Activated CD8-positive, alpha-beta T cell treated with anti-CD3 and anti-CD28 coated beads for 36 hours (primary cell): ENCODE measurements at regions of chr2 and their contacts with region 1.

Region 1: GRCh38 chr2:102240640-102241370 is 54.0 kb downstream of the IL1RL2 start:
- DNase-seq: peak; percentile 92
- ATAC-seq: peak; percentile 90
- H3K4me3 Mint-ChIP-seq: no peak overlapping the region
- H3K27ac Mint-ChIP-seq: peak overlapping the region; percentile 65
- H3K4me1 Mint-ChIP-seq: peaks cover 32% of the 10 kb centered on the region
- H3K27me3 Mint-ChIP-seq: no peaks in the 10 kb centered on the region
- CTCF ChIP-seq: peak; percentile 92

Region 2: GRCh38 chr2:100640431-100641124 is 1600.2 kb before region 1 on chr2:
- CTCF ChIA-PET with region 1: no interaction called
- POLR2A ChIA-PET with region 1: no interaction called
- intact Hi-C with region 1: no loop called
- DNase-seq: no peak
- ATAC-seq: no peak
- H3K4me3 Mint-ChIP-seq: no peak overlapping the region
- H3K27ac Mint-ChIP-seq: no peak overlapping the region
- H3K4me1 Mint-ChIP-seq: peaks cover 37% of the 10 kb centered on the region
- H3K27me3 Mint-ChIP-seq: no peaks in the 10 kb centered on the region
- CTCF ChIP-seq: no peak

Region 3: DNA sequence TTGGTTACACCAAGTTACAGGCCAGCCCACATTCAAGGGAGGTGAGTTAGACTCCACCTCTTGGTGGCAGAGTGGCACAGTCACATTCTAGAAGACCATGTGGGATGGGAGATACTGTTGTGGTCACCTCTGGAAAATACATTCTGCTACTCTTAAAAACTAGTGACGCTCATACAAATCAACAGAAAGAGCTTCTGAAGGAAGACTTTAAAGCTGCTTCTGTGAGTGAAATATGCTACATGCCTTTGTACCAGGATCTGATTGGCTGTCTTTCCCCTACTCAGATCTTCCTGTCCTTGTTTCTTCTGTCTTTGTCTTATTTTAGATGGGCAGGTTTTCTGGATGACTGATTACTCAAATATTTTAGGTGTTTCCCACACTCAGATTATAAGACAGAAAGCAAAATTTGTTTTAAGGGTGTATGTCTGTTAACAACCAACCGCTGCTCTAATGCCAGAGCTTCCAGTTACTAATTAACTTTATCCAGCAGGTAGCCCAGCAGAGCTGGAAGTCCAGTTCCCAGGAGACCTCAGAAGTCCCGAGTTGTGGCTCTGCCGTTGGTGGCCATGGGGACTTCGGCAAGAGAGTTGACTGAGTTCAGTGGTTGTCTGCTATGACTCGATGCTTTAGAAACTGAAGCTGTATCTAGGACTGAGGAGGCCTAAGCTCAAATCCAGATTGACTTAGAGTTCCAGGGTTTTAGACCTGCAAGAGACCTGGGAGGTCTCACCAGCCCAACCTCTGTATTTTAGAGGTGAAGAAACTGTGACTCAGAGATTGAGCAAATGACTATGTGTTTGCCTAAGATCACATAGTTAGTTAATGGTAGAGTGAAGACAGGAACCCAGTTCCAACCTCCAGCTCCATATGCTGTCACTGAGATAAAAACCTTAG is 241.7 kb before region 1 on chr2:
- CTCF ChIA-PET with region 1: interaction called, 222 read pairs
- POLR2A ChIA-PET with region 1: no interaction called
- intact Hi-C with region 1: no loop called
- DNase-seq: peak; percentile 41
- ATAC-seq: peak; percentile 66
- H3K4me3 Mint-ChIP-seq: peak overlapping the region; percentile 8
- H3K27ac Mint-ChIP-seq: peak overlapping the region; percentile 67
- H3K4me1 Mint-ChIP-seq: peaks cover 25% of the 10 kb centered on the region
- H3K27me3 Mint-ChIP-seq: no peaks in the 10 kb centered on the region
- CTCF ChIP-seq: no peak

Region 4: DNA sequence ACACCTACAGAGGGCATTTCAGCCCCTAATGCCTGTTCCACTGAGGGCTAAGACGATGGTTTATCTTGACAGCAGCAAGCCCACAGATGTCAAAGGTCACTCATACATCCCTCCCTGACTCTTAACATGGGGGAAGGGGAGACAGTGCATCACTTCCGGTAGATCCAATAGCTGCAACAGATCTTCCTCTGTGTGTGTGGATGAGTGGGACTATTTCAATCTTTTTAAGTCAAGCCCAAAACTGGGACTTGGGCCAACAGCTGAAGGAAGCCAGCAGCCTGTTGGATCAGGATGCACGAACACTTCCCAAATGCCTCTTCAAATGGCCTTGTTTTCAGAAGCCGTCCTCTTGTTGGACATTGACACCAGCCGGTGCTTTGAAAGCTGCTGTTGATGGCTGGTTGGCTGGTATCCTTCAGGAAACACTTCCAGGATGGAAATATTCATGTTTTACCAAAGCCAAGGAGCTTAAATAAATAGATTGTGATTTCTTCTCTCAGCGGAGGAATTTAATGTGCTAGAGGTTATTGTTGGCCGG is 189.9 kb before region 1 on chr2:
- CTCF ChIA-PET with region 1: interaction called, 10 read pairs
- POLR2A ChIA-PET with region 1: no interaction called
- intact Hi-C with region 1: no loop called
- DNase-seq: no peak
- ATAC-seq: no peak
- H3K4me3 Mint-ChIP-seq: no peak overlapping the region
- H3K27ac Mint-ChIP-seq: no peak overlapping the region
- H3K4me1 Mint-ChIP-seq: peaks cover 2% of the 10 kb centered on the region
- H3K27me3 Mint-ChIP-seq: peaks cover 10% of the 10 kb centered on the region
- CTCF ChIP-seq: no peak

Region 5: GRCh38 chr2:102114290-102114721 is 126.5 kb before region 1 on chr2:
- CTCF ChIA-PET with region 1: interaction called, 16 read pairs
- POLR2A ChIA-PET with region 1: no interaction called
- intact Hi-C with region 1: no loop called
- DNase-seq: no peak
- ATAC-seq: peak; percentile 79
- H3K4me3 Mint-ChIP-seq: no peak overlapping the region
- H3K27ac Mint-ChIP-seq: no peak overlapping the region
- H3K4me1 Mint-ChIP-seq: peaks cover 41% of the 10 kb centered on the region
- H3K27me3 Mint-ChIP-seq: peaks cover 4% of the 10 kb centered on the region
- CTCF ChIP-seq: no peak

Region 6: DNA sequence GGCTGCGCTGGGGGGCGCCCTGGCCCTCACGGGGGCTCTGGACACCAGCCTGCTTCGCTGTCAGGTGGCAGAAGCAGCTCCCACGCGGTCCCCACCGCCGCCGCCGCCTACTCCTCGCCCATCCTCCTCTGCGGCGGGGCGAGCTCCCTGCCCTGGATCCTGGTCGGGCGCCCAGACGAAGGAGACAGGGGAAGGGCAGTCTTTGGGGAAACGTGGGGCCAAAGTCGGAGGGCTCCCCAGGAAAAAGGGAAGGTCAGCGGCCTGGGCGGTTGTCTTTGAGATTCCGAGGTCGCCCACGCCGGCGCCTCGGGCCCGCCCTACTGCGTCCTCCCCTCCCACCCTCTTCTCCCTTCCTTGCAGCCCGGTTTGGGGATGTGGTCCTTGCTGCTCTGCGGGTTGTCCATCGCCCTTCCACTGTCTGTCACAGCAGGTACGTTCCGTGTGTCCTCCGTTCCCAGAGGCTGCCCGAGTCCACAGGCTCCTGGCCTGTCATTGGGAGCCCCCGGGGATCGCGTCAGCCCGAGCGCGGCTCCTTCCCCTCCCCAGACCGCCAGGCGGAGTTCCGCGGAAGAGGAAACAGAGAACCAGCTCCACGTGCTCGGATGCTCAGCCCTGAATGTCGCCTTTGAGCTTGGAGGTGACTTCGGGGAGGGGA is 53.2 kb before region 1 on chr2:
- CTCF ChIA-PET with region 1: interaction called, 42 read pairs
- POLR2A ChIA-PET with region 1: interaction called, 3 read pairs
- intact Hi-C with region 1: no loop called
- DNase-seq: peak; percentile 54
- ATAC-seq: peak; percentile 71
- H3K4me3 Mint-ChIP-seq: peak overlapping the region; percentile 68
- H3K27ac Mint-ChIP-seq: peak overlapping the region; percentile 71
- H3K4me1 Mint-ChIP-seq: peaks cover 14% of the 10 kb centered on the region
- H3K27me3 Mint-ChIP-seq: peaks cover 13% of the 10 kb centered on the region
- CTCF ChIP-seq: no peak

Region 7: GRCh38 chr2:102251042-102251848 is 10.4 kb after region 1 on chr2:
- CTCF ChIA-PET with region 1: interaction called, 41 read pairs
- POLR2A ChIA-PET with region 1: interaction called, 3 read pairs
- intact Hi-C with region 1: no loop called
- DNase-seq: peak; percentile 75
- ATAC-seq: peak; percentile 70
- H3K4me3 Mint-ChIP-seq: peak overlapping the region; percentile 74
- H3K27ac Mint-ChIP-seq: peak overlapping the region; percentile 86
- H3K4me1 Mint-ChIP-seq: peaks cover 39% of the 10 kb centered on the region
- H3K27me3 Mint-ChIP-seq: peaks cover 7% of the 10 kb centered on the region
- CTCF ChIP-seq: peak; percentile 86

Region 8: DNA sequence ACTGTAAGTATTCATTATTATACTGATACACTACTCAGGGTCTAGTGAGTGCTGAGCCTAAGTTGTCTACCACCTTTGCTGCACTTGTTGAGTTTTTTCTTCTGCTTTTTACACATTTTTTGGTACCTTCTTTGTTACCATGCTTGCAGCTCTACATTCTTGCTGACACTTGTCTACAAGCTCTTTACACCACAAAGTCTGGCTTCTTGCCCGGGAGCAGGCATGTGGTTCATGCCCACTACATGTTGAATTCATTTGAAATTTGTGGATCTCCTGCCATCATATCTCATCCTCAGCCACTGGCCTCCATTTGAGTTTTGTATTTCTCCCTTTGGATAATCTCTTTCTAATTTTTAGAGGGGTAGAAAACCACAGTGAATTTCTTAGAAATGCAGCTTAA is 144.7 kb after region 1 on chr2:
- CTCF ChIA-PET with region 1: no interaction called
- POLR2A ChIA-PET with region 1: no interaction called
- intact Hi-C with region 1: no loop called
- DNase-seq: no peak
- ATAC-seq: no peak
- H3K4me3 Mint-ChIP-seq: no peak overlapping the region
- H3K27ac Mint-ChIP-seq: no peak overlapping the region
- H3K4me1 Mint-ChIP-seq: peaks cover 10% of the 10 kb centered on the region
- H3K27me3 Mint-ChIP-seq: no peaks in the 10 kb centered on the region
- CTCF ChIP-seq: no peak

Region 9: DNA sequence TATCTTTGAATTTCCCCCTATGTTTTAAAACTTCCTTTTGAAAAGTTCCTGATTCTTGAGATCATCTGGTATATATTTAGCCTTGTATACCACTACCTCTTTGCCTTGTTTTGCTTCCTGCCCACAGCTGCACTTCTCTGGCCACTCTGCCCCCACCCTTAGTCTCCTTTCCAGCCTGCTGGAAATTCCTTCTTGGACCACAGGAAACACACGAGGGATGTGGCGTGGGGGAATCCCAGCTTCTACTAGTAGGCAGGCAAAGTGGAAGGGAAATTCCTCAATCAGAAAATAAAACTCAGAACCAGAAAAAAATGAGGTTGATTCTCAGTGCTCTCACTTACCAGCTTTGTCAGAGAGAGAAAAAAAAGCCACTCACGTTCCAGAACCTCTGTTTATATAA is 195.5 kb after region 1 on chr2:
- CTCF ChIA-PET with region 1: interaction called, 12 read pairs
- POLR2A ChIA-PET with region 1: no interaction called
- intact Hi-C with region 1: no loop called
- DNase-seq: peak; percentile 28
- ATAC-seq: no peak
- H3K4me3 Mint-ChIP-seq: peak overlapping the region; percentile 23
- H3K27ac Mint-ChIP-seq: peak overlapping the region; percentile 81
- H3K4me1 Mint-ChIP-seq: peaks cover 48% of the 10 kb centered on the region
- H3K27me3 Mint-ChIP-seq: no peaks in the 10 kb centered on the region
- CTCF ChIP-seq: no peak